Endothelial cell of umbilical vein (primary cell): ENCODE measurements at regions of chr6 and their contacts with region 1.

Region 1: GRCh38 chr6:27126815-27127537 is 120.5 kb upstream of the PRSS16 start:
- DNase-seq: peak; percentile 92
- H3K4me3 ChIP-seq: peak overlapping the region in 2 of 3 experiments; percentile 24 to 28
- H3K27ac ChIP-seq: no peak overlapping the region
- H3K4me1 ChIP-seq: peaks cover 10% of the 10 kb centered on the region
- H3K27me3 ChIP-seq: no peaks in the 10 kb centered on the region
- CTCF ChIP-seq: peak; percentile 71 to 73
- POLR2A ChIP-seq: peak; percentile 46

Region 2: GRCh38 chr6:26607434-26608230 is 519.3 kb before region 1 on chr6:
- CTCF ChIA-PET with region 1: interaction called, 3 read pairs
- POLR2A ChIA-PET with region 1: no interaction called
- dilution Hi-C with region 1: no loop called
- intact Hi-C with region 1: loop called (anchors 1 kb)
- DNase-seq: peak; percentile 61
- H3K4me3 ChIP-seq: peak overlapping the region in 1 of 3 experiments; percentile 11
- H3K27ac ChIP-seq: no peak overlapping the region
- H3K4me1 ChIP-seq: peaks cover 2% of the 10 kb centered on the region
- H3K27me3 ChIP-seq: peaks cover 21 to 46% of the 10 kb centered on the region in 2 experiments
- CTCF ChIP-seq: peak; percentile 71 to 72
- POLR2A ChIP-seq: no peak

Region 3: DNA sequence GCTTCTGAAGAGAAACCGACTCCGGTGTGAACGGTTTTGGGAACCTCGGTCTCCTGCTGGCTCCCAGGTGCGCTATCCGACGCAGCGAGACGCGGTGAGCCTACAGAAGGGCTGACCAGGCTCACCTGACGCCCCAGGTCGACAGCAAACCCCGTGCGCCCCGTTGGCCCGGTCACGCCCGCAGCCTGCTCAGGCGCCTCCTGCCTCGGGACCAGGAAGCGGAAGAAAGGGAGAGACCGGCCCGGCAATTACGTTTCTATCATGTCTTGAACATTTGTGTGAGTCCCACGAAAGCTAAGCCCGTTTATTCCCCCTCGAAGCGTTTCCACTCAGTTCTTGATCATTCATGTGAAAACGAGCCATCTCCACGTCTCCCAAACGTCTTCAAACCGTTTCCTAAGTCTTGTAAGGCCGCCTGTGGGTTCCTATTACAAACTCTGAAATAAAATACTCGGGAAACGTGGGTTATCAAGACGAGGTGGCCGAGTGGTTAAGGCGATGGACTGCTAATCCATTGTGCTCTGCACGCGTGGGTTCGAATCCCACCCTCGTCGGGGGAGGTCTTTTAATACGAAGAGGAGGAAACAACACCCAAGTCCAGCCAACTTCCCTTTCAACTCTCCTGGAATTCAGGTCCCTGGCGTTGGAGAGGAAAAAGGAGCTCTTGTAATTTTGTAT is 30.0 kb before region 1 on chr6:
- CTCF ChIA-PET with region 1: interaction called, 6 read pairs
- POLR2A ChIA-PET with region 1: no interaction called
- dilution Hi-C with region 1: no loop called
- intact Hi-C with region 1: loop called (anchors 2 kb)
- DNase-seq: peak; percentile 64
- H3K4me3 ChIP-seq: peak overlapping the region; percentile 48 to 70 (median 61)
- H3K27ac ChIP-seq: no peak overlapping the region
- H3K4me1 ChIP-seq: peaks cover 9% of the 10 kb centered on the region
- H3K27me3 ChIP-seq: peaks cover 4 to 13% of the 10 kb centered on the region in 2 experiments
- CTCF ChIP-seq: no peak
- POLR2A ChIP-seq: no peak

Region 4: DNA sequence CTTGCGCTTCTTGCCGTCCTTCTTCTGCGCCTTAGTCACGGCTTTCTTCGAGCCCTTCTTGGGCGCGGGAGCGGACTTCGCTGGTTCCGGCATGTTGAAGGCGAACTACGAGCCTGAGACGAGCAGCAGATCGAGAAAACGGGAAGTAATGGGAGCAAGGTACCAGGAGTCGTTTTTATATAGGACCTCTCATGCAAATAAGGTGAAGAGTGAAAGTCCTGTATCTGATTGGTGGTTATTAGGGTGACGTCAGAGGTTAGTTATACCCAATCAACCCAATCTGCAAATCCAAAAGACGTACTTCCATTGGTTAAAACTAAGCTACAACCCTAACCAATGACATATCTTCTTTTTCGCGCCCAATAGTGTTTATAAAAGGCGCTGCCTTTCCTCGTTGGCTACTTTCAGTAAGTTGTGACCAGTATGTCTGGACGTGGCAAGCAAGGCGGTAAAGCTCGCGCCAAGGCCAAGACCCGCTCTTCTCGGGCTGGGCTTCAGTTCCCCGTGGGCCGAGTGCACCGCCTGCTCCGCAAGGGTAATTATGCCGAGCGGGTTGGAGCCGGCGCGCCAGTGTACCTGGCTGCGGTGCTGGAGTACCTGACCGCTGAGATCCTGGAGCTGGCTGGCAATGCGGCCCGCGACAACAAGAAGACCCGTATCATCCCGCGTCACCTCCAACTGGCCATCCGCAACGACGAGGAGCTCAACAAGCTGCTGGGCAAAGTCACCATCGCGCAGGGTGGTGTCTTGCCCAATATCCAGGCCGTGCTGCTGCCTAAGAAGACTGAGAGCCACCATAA is 19.9 kb after region 1 on chr6:
- CTCF ChIA-PET with region 1: interaction called, 22 read pairs
- POLR2A ChIA-PET with region 1: interaction called, 107 read pairs
- dilution Hi-C with region 1: no loop called
- intact Hi-C with region 1: loop called (anchors 1 kb)
- DNase-seq: peak; percentile 99
- H3K4me3 ChIP-seq: peak overlapping the region in 2 of 3 experiments; percentile 21 to 46
- H3K27ac ChIP-seq: peak overlapping the region; percentile 66
- H3K4me1 ChIP-seq: peaks cover 5% of the 10 kb centered on the region
- H3K27me3 ChIP-seq: peaks cover 0 to 1% of the 10 kb centered on the region in 2 experiments
- CTCF ChIP-seq: no peak
- POLR2A ChIP-seq: peak; percentile 95

Region 5: GRCh38 chr6:27157459-27158315 is 30.7 kb after region 1 on chr6:
- CTCF ChIA-PET with region 1: interaction called, 55 read pairs
- POLR2A ChIA-PET with region 1: no interaction called
- dilution Hi-C with region 1: no loop called
- intact Hi-C with region 1: loop called (anchors 1 kb)
- DNase-seq: peak; percentile 57
- H3K4me3 ChIP-seq: peak overlapping the region; percentile 30 to 64 (median 59)
- H3K27ac ChIP-seq: no peak overlapping the region
- H3K4me1 ChIP-seq: peaks cover 10% of the 10 kb centered on the region
- H3K27me3 ChIP-seq: peaks cover 8 to 11% of the 10 kb centered on the region in 2 experiments
- CTCF ChIP-seq: peak; percentile 42 to 63
- POLR2A ChIP-seq: no peak

Region 6: DNA sequence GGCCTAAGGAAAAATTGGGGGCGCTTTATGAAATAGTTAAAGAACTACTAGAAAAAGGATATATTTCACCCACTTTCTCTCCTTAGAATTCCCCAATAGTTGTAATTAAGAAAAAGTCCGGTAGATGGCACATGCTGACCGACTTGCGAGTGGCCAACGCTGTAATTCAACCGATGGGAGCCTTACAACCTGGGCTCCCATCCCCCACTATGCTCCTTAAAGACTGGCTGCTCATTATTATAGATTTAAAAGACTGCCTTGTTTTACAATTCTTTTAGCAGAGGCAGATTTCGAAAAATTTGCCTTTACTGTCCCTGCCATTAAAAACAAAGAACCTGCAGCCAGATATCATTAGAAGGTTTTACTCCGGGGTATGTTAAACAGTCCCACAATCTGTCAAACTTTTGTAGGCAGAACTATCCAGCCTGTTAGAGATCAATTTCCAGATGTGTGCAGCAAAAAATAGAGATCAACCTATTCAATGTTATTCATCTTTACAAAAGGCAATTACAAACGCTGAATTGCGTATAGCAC is 62.0 kb after region 1 on chr6:
- CTCF ChIA-PET with region 1: interaction called, 8 read pairs
- POLR2A ChIA-PET with region 1: no interaction called
- dilution Hi-C with region 1: no loop called
- intact Hi-C with region 1: loop called (anchors 2 kb)
- DNase-seq: peak; percentile 83
- H3K4me3 ChIP-seq: peak overlapping the region; percentile 59 to 80 (median 66)
- H3K27ac ChIP-seq: peak overlapping the region; percentile 37
- H3K4me1 ChIP-seq: no peaks in the 10 kb centered on the region
- H3K27me3 ChIP-seq: peaks cover 0 to 4% of the 10 kb centered on the region in 2 experiments
- CTCF ChIP-seq: peak; percentile 54 to 55
- POLR2A ChIP-seq: no peak

Region 7: GRCh38 chr6:27601668-27602254 is 474.8 kb after region 1 on chr6:
- CTCF ChIA-PET with region 1: no interaction called
- POLR2A ChIA-PET with region 1: no interaction called
- dilution Hi-C with region 1: no loop called
- intact Hi-C with region 1: no loop called
- DNase-seq: no peak
- H3K4me3 ChIP-seq: peak overlapping the region in 1 of 3 experiments; percentile 9
- H3K27ac ChIP-seq: no peak overlapping the region
- H3K4me1 ChIP-seq: no peaks in the 10 kb centered on the region
- H3K27me3 ChIP-seq: peaks cover 0 to 11% of the 10 kb centered on the region in 2 experiments
- CTCF ChIP-seq: no peak
- POLR2A ChIP-seq: no peak

Region 8: GRCh38 chr6:27795697-27796494 is 668.9 kb after region 1 on chr6:
- CTCF ChIA-PET with region 1: interaction called, 22 read pairs
- POLR2A ChIA-PET with region 1: no interaction called
- dilution Hi-C with region 1: no loop called
- intact Hi-C with region 1: no loop called
- DNase-seq: peak; percentile 95
- H3K4me3 ChIP-seq: no peak overlapping the region
- H3K27ac ChIP-seq: no peak overlapping the region
- H3K4me1 ChIP-seq: peaks cover 7% of the 10 kb centered on the region
- H3K27me3 ChIP-seq: no peaks in the 10 kb centered on the region
- CTCF ChIP-seq: peak; percentile 60 to 69
- POLR2A ChIP-seq: no peak